Vagina (tissue), 2 donors: ENCODE measurements at regions of chr5 and their contacts with region 1.

Region 1: DNA sequence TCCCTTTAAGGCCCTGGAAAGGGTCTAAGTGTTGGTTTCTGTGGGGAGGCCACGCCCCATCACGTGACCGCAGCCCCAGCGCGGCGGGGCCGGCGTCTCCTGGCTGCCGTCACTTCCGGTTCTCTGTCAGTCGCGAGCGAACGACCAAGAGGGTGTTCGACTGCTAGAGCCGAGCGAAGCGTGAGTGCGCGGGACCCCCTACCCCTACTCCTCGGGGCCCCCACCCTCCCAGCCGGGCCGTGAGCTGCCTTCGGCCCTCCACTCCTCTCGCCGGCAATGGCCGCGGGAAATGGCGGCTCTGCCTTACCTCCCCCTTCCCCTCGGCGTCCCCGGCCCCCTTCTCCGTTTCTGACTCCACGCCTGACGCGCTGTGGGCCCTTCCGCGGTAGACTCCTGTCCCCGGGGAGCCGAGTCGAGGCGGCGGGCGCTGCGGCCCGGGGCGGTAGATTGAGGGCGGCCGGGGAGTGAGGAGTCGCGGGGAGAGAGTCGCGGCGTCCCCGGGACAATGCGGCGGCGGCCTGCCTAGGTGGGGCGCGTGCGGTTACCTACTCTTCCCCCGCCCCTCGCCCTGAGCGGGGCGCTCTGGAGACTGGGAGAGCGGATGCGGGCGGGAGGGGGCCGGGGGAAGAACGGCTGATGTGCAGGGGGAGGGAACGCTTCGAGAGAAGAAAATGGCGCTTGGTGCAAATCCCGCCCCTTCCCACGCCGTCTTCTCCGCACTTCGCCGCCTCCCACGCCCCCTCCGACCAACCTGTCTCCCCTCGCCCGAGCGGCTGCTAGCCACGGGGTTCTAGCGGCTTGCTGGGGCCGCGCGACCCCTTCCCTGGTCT is at the start of gene SUB1:
- DNase-seq: peak in 1 of 2 donors; percentile 91
- H3K4me3 ChIP-seq: peak within 1 kb of the TSS; percentile 74 to 82
- H3K27ac ChIP-seq: peak within 1 kb of the TSS; percentile 95
- H3K4me1 ChIP-seq: peaks cover 20% of the 10 kb centered on the region
- H3K27me3 ChIP-seq: no peaks in the 10 kb centered on the region
- CTCF ChIP-seq: no peak
- POLR2A ChIP-seq: peak in 1 of 2 donors; percentile 84
- total RNA-seq, gene SUB1: 71.9 TPM

Region 2: DNA sequence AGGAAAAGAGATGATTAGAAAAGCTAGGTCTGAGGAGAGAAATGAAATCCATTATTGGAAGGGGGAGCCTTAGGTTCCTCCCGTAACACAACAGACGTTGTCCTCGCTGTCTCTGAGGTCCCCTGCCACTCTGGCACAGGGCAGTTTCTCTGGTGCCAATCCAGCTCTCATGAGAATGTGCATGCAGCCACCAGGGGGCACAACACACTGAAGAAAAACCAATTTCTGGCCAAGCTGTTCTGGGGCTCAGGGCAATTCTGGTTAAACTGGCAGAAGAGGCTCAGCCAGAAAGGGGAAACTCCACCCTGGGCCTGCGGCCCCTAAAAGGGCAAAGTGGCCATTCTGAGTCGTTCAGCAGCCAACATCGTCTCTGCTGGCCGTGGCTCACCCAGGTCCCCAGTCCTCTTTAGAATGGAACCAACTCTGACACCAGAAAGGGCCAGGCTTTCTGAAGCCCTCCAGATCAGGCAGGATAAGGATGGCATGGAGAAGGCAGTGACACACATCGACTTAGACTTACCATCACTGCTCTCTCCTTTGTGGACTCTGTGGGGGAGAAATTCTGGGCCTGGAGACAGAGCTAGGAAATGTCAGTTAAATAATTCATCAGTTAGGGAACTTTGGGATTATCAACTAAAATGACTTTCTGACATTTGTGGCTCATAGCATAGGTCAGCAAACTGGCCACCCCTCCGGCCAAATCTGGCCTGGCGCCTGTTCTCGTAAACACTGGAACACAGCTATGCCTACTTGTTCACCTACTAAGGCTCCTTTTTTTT is 353.0 kb before region 1 on chr5:
- intact Hi-C with region 1: loop called (anchors 10 kb)
- DNase-seq: no peak
- H3K4me3 ChIP-seq: no peak overlapping the region
- H3K27ac ChIP-seq: peak overlapping the region; percentile 62
- H3K4me1 ChIP-seq: peaks cover 39% of the 10 kb centered on the region
- H3K27me3 ChIP-seq: no peaks in the 10 kb centered on the region
- CTCF ChIP-seq: peak; percentile 53 to 88 (median 79)
- POLR2A ChIP-seq: no peak

Region 3: DNA sequence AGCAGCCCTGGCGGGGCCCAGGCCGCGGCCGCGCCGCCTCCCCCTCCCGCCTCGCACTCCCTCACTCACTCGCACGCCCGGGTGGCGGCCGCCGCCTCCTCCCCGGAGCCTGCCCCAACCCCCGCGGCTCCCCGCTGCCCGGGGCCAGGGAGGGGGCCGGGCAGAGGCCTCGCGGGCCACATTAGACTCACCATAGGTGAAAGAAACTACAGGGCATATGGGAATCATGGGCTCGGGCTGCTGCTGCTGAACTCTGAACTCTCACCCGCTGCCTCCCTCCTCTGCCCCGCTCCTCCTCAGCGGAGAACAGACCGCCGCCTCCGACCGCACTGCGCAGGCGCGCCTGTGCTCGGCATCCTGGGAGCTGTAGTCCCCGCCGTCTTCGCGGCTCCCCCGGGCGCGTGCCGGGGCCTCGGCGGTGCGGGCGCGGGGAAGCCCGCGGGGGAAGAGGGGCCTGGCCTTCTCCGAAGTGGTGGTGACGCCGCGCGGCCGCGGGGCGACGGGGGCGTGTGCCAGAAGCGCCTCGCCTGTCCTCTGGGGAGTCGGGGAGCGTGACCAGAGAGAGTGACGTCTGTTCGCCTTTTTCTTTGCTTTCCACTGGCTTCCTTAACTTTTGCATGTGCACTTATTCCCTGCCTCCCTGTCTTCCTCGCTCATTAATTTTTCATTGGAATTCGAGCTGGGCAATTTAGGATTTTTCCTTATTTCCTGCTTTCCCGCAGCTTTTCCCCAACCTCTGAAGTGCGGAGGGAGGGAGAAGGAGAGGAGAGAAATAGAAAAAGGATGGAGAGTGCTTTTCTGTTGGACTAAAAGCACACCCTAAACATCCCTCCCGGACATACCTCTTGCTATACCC is 141.0 kb before region 1 on chr5 and contains the start of gene ZFR:
- intact Hi-C with region 1: loop called (anchors 5 kb)
- DNase-seq: peak in 1 of 2 donors; percentile 94
- H3K4me3 ChIP-seq: peak within 1 kb of the TSS; percentile 90 to 98
- H3K27ac ChIP-seq: peak within 1 kb of the TSS; percentile 96
- H3K4me1 ChIP-seq: peaks cover 47% of the 10 kb centered on the region
- H3K27me3 ChIP-seq: no peaks in the 10 kb centered on the region
- CTCF ChIP-seq: no peak
- POLR2A ChIP-seq: peak in 1 of 2 donors; percentile 88
- total RNA-seq, gene ZFR: 80.8 TPM

Region 4: GRCh38 chr5:32489791-32490582 is 95.7 kb before region 1 on chr5:
- intact Hi-C with region 1: loop called (anchors 5 kb)
- DNase-seq: no peak
- H3K4me3 ChIP-seq: no peak overlapping the region
- H3K27ac ChIP-seq: peak overlapping the region; percentile 48
- H3K4me1 ChIP-seq: no peaks in the 10 kb centered on the region
- H3K27me3 ChIP-seq: no peaks in the 10 kb centered on the region
- CTCF ChIP-seq: peak; percentile 58 to 78 (median 59)
- POLR2A ChIP-seq: no peak